ENCODE measurements at regions of chr16 and their contacts with region 1.

Region 1: DNA sequence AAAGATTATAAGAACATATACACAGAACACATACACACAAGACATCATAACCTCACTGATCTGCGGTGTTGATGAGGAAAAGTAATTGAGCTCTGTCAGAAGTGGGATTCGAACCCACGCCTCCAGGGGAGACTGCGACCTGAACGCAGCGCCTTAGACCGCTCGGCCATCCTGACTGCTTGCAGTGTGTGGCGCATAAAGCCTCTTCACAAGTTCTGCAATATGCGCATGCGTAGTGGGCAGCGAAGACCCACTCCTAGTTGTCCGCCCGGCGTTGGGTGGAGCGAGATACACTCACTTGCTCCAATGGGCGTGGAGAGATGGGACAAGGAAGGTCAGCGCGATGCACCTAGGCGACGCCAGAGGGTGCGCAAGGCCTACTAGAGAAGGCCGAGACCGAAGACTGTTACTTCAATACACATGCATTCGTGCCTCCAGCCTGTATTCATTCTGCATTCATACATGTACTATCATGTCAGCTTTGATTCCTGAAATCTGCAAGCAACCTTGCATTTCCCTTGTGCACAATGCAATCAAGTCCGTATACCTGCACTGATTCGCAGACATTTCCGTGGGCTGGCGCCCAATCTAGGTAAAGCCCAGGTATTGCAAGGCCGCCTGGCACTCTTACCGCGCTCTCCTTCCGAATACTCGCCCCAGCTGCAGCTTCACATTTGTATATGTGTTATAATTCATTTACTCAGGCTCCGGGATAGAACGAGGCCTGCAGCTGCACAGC is 16.1 kb upstream of the PLLP start:
- DNase-seq: peak; percentile 99
- H3K4me3 ChIP-seq: peak overlapping the region; percentile 56 to 87 (median 59)
- H3K4me3 Mint-ChIP-seq: peak overlapping the region in 1 of 2 donors; percentile 59
- H3K27ac ChIP-seq: peak overlapping the region; percentile 80
- H3K27ac Mint-ChIP-seq: no peak overlapping the region
- H3K4me1 ChIP-seq: peaks cover 19 to 20% of the 10 kb centered on the region in 2 donors
- H3K4me1 Mint-ChIP-seq: peaks cover 4% of the 10 kb centered on the region
- H3K27me3 ChIP-seq: no peaks in the 10 kb centered on the region
- H3K27me3 Mint-ChIP-seq: peaks cover 14 to 18% (median 15%) of the 10 kb centered on the region in 3 donors
- CTCF ChIP-seq: peak; percentile 91

Region 2: GRCh38 chr16:57244767-57245471 is 55.6 kb before region 1 on chr16 and contains the start of gene ARL2BP:
- intact Hi-C with region 1: loop called in 1 of 2 experiments (anchors 5 kb)
- DNase-seq: peak; percentile 96 to 98 (median 96)
- H3K4me3 ChIP-seq: peak within 1 kb of the TSS; percentile 54 to 84 (median 79)
- H3K4me3 Mint-ChIP-seq: peak within 1 kb of the TSS; percentile 86 to 92
- H3K27ac ChIP-seq: peak within 1 kb of the TSS; percentile 75 to 98
- H3K27ac Mint-ChIP-seq: peak within 1 kb of the TSS; percentile 96 to 99 (median 98)
- H3K4me1 ChIP-seq: peaks cover 27 to 36% of the 10 kb centered on the region in 2 donors
- H3K4me1 Mint-ChIP-seq: peaks cover 29% of the 10 kb centered on the region
- H3K27me3 ChIP-seq: no peaks in the 10 kb centered on the region
- H3K27me3 Mint-ChIP-seq: no peaks in the 10 kb centered on the region
- CTCF ChIP-seq: no peak
- polyA plus RNA-seq, gene ARL2BP: 35.4 to 84.6 (median 84.0) TPM

Region 3: GRCh38 chr16:57422026-57422944 is 121.7 kb after region 1 on chr16:
- intact Hi-C with region 1: loop called (anchors 1 kb)
- DNase-seq: peak in 1 of 3 donors; percentile 17
- H3K4me3 ChIP-seq: no peak overlapping the region
- H3K4me3 Mint-ChIP-seq: no peak overlapping the region
- H3K27ac ChIP-seq: no peak overlapping the region
- H3K27ac Mint-ChIP-seq: no peak overlapping the region
- H3K4me1 ChIP-seq: peaks cover 9 to 12% of the 10 kb centered on the region in 2 donors
- H3K4me1 Mint-ChIP-seq: peaks cover 11% of the 10 kb centered on the region
- H3K27me3 ChIP-seq: no peaks in the 10 kb centered on the region
- H3K27me3 Mint-ChIP-seq: peaks cover 2 to 3% (median 2%) of the 10 kb centered on the region in 3 donors
- CTCF ChIP-seq: peak; percentile 23

Region 4: GRCh38 chr16:57519796-57520360 is 219.3 kb after region 1 on chr16:
- intact Hi-C with region 1: loop called in 1 of 2 experiments (anchors 5 kb)
- DNase-seq: peak; percentile 51 to 66 (median 63)
- H3K4me3 ChIP-seq: no peak overlapping the region
- H3K4me3 Mint-ChIP-seq: no peak overlapping the region
- H3K27ac ChIP-seq: no peak overlapping the region
- H3K27ac Mint-ChIP-seq: no peak overlapping the region
- H3K4me1 ChIP-seq: no peaks in the 10 kb centered on the region
- H3K4me1 Mint-ChIP-seq: peaks cover 9% of the 10 kb centered on the region
- H3K27me3 ChIP-seq: peaks cover 0 to 4% of the 10 kb centered on the region in 2 donors
- H3K27me3 Mint-ChIP-seq: peaks cover 26 to 30% (median 26%) of the 10 kb centered on the region in 3 donors
- CTCF ChIP-seq: peak; percentile 99

Measured in CD14-positive monocyte (primary cell).